ENCODE measurements at regions of chr1 and their contacts with region 1.

Region 1: GRCh38 chr1:167687919-167688519 is 33.8 kb upstream of the MPZL1 start:
- DNase-seq: peak; percentile 63 to 95
- H3K4me3 ChIP-seq: no peak overlapping the region
- H3K27ac ChIP-seq: no peak overlapping the region
- H3K4me1 ChIP-seq: peaks cover 2 to 12% (median 6%) of the 10 kb centered on the region in 4 experiments
- H3K27me3 ChIP-seq: no peaks in the 10 kb centered on the region; a peak in 1 of 7 replicates
- CTCF ChIP-seq: peak; percentile 31 to 88 (median 82)
- EP300 ChIP-seq: no peak
- POLR2A ChIP-seq: no peak
- RAD21 ChIP-seq: peak; percentile 90 to 95

Region 2: DNA sequence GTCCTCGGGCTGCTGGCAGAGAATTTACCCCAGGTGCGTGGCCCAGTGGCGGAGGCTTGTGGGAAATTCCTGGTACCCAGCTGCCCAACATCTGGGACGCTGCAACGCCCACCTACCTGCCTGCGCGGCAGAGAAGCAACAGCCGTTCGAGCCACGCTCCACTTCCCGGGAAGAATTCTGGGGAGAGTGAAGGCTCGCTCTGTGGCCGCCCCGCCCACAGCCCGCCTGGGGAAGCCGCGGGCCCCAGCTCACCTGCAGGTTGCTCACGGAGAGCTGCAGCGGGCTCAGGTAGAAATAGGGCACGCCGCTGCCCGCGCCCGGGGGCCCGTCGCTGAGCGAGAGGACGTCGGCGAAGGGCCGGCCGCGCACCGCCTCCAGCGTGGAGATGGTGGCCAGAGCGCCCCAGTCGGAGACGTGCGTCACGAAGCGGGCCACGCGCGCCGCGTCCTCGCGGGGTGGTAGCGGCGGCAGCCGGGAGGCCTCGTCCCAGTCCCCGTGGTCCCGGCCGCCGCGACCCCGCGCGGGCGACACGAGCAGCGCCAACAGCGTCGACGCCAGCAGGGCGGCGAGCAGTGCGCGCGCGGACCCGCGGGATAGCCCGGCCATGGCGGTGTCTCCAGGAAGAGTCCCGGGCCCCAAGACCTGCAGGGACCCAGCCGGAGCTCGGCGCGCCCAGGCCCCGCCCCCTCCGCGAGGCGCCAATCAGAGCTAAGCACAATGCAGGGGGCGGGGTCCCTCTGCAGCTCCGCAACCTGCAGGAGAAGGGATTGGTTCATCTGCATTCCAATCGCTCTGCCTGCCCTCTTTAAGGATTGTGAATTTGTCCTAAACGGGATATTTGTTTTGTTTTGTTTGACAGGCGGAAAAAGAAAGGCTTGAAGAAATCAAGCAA is 134.6 kb before region 1 on chr1 and contains the start of gene CREG1:
- CTCF ChIA-PET with region 1: interaction called, 24 read pairs
- POLR2A ChIA-PET with region 1: interaction called, 5 read pairs
- DNase-seq: peak; percentile 78 to 93
- H3K4me3 ChIP-seq: peak within 1 kb of the TSS; percentile 65 to 84 (median 70)
- H3K27ac ChIP-seq: 0 out of 2 replicates have a peak within 1 kb of the TSS, but pooled peaks have one; percentile 12
- H3K4me1 ChIP-seq: no peaks in the 10 kb centered on the region; a peak in 1 of 7 replicates
- H3K27me3 ChIP-seq: no peaks in the 10 kb centered on the region; a peak in 1 of 7 replicates
- CTCF ChIP-seq: no peak
- EP300 ChIP-seq: no peak
- POLR2A ChIP-seq: peak; percentile 84 to 94
- RAD21 ChIP-seq: no peak
- total RNA-seq, gene CREG1: 28.7 and 30.1 TPM in 2 replicates

Region 3: DNA sequence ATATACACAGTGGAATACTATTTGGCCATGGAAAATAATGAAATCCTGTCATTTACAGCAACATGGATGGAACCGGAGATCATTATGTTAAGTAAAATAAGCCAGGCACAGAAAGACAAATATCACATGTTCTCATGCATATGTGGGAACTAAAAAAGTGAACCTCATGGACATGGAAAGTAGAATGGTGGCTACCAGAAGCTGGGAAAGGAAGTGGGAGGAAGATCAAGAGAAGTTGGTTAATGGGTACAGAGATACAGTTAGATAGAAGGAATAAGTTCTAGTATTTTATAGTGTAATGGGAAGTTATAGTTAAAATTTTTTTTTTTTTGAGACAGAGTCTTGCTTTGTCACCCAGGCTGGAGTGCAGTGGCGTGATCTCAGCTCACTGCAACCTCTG is 99.7 kb before region 1 on chr1:
- CTCF ChIA-PET with region 1: interaction called, 12 read pairs
- POLR2A ChIA-PET with region 1: no interaction called
- DNase-seq: no peak
- H3K4me3 ChIP-seq: no peak overlapping the region
- H3K27ac ChIP-seq: no peak overlapping the region
- H3K4me1 ChIP-seq: no peaks in the 10 kb centered on the region
- H3K27me3 ChIP-seq: no peaks in the 10 kb centered on the region
- CTCF ChIP-seq: no peak
- EP300 ChIP-seq: no peak
- POLR2A ChIP-seq: no peak
- RAD21 ChIP-seq: no peak

Region 4: DNA sequence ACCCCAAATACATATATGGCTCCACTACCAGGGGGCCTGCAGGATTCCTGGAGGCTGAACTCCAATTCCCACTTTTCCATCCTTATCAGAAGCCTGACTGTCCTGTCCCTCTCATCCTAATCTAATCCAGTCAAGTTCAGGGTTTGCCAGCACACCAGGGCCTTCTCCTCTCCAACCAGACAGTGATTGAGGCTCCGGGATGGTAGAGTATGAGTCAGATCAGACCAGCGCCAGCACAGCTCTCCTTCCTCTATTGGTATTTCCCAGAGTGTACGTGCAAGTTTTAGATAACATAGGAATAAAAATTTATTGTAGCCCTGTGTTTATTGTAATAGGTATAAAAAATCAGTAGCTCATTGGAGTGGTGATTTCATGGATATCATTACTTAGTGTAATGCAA is 82.4 kb before region 1 on chr1:
- CTCF ChIA-PET with region 1: interaction called, 33 read pairs
- POLR2A ChIA-PET with region 1: no interaction called
- DNase-seq: no peak
- H3K4me3 ChIP-seq: no peak overlapping the region
- H3K27ac ChIP-seq: no peak overlapping the region
- H3K4me1 ChIP-seq: peaks cover 0 to 5% (median 0%) of the 10 kb centered on the region in 4 experiments; a peak in 1 of 7 replicates
- H3K27me3 ChIP-seq: peaks cover 0 to 1% (median 0%) of the 10 kb centered on the region in 4 experiments; a peak in 1 of 7 replicates
- CTCF ChIP-seq: no peak
- EP300 ChIP-seq: no peak
- POLR2A ChIP-seq: no peak
- RAD21 ChIP-seq: no peak

Region 5: GRCh38 chr1:167663002-167663772 is 24.8 kb before region 1 on chr1:
- CTCF ChIA-PET with region 1: interaction called, 20 read pairs
- POLR2A ChIA-PET with region 1: no interaction called
- DNase-seq: no peak
- H3K4me3 ChIP-seq: no peak overlapping the region
- H3K27ac ChIP-seq: no peak overlapping the region
- H3K4me1 ChIP-seq: no peaks in the 10 kb centered on the region
- H3K27me3 ChIP-seq: 0 out of 7 replicates have a peak, but pooled peaks cover 0 to 3% (median 0%) of the 10 kb centered on the region in 4 experiments
- CTCF ChIP-seq: no peak
- EP300 ChIP-seq: no peak
- POLR2A ChIP-seq: no peak
- RAD21 ChIP-seq: no peak

Region 6: DNA sequence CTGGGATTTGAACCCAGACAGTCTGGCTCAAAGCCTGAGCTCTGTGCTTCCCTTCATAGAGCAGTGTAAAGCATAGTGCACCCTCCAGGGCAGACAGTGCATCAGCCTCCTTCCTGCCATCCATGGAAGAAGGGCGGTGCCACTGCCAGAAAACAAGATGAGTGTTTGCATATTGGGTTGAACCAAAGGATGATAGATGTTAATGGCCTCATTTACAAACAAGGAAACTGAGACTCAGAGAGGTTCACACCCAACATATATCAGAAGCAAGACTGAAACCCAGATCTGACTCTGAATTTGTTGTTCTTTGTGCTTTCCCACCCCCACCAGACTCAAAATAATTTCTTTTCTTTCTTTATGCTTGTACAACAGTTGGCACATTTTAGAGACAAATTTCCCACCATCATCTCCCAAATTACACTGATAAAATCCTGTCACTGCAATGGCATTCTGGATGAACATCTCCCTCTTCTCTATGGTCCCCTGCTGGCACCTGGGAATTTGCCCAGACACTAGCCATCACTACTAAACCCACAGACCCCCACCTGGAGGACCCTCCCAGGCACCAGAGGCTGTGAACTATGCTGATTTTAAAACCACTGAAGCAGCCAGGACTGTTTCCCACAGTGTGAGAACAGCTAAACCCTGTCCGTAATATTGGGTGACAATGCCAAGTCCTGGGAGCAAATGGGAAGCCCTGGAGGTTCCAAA is 11.7 kb before region 1 on chr1:
- CTCF ChIA-PET with region 1: interaction called, 30 read pairs
- POLR2A ChIA-PET with region 1: interaction called, 5 read pairs
- DNase-seq: no peak
- H3K4me3 ChIP-seq: no peak overlapping the region
- H3K27ac ChIP-seq: no peak overlapping the region
- H3K4me1 ChIP-seq: no peaks in the 10 kb centered on the region
- H3K27me3 ChIP-seq: no peaks in the 10 kb centered on the region; a peak in 1 of 7 replicates
- CTCF ChIP-seq: no peak
- EP300 ChIP-seq: no peak
- POLR2A ChIP-seq: no peak
- RAD21 ChIP-seq: no peak

Region 7: GRCh38 chr1:167715157-167715999 is 27.4 kb after region 1 on chr1:
- CTCF ChIA-PET with region 1: interaction called, 11 read pairs
- POLR2A ChIA-PET with region 1: no interaction called
- DNase-seq: peak in 1 of 2 experiments; percentile 95
- H3K4me3 ChIP-seq: peak overlapping the region; percentile 84 to 97 (median 94)
- H3K27ac ChIP-seq: no peak overlapping the region
- H3K4me1 ChIP-seq: no peaks in the 10 kb centered on the region; a peak in 2 of 7 replicates
- H3K27me3 ChIP-seq: peaks cover 0 to 13% (median 9%) of the 10 kb centered on the region in 4 experiments; a peak in 6 of 7 replicates
- CTCF ChIP-seq: peak; percentile 39 to 95 (median 66)
- EP300 ChIP-seq: no peak
- POLR2A ChIP-seq: no peak
- RAD21 ChIP-seq: peak in 1 of 2 experiments; percentile 37; a peak in 2 of 4 replicates

Measured in H1 (cell line).